ENCODE measurements at regions of chr12 and their contacts with region 1.

Region 1: GRCh38 chr12:32062881-32063280 is 43.8 kb upstream of the BICD1 start:
- DNase-seq: no peak
- ATAC-seq: no peak
- H3K4me3 ChIP-seq: no peak overlapping the region
- H3K27ac ChIP-seq: no peak overlapping the region
- H3K4me1 ChIP-seq: no peaks in the 10 kb centered on the region
- H3K27me3 ChIP-seq: no peaks in the 10 kb centered on the region
- CTCF ChIP-seq: no peak
- EP300 ChIP-seq: no peak
- POLR2A ChIP-seq: no peak
- RAD21 ChIP-seq: no peak

Region 2: GRCh38 chr12:31650927-31651326 is 412.0 kb before region 1 on chr12:
- CTCF ChIA-PET with region 1: no interaction called
- POLR2A ChIA-PET with region 1: interaction called, 5 read pairs
- in situ Hi-C with region 1: no loop called
- intact Hi-C with region 1: loop called (anchors 5 kb)
- DNase-seq: no peak
- ATAC-seq: no peak
- H3K4me3 ChIP-seq: peak overlapping the region in 1 of 3 experiments; percentile 16; a peak in 2 of 6 replicates
- H3K27ac ChIP-seq: no peak overlapping the region
- H3K4me1 ChIP-seq: peaks cover 41% of the 10 kb centered on the region
- H3K27me3 ChIP-seq: no peaks in the 10 kb centered on the region; a peak in 2 of 5 replicates
- CTCF ChIP-seq: no peak
- EP300 ChIP-seq: no peak
- POLR2A ChIP-seq: no peak
- RAD21 ChIP-seq: no peak